PC-9 (cell line): ENCODE measurements at regions of chr3 and their contacts with region 1.

Region 1: DNA sequence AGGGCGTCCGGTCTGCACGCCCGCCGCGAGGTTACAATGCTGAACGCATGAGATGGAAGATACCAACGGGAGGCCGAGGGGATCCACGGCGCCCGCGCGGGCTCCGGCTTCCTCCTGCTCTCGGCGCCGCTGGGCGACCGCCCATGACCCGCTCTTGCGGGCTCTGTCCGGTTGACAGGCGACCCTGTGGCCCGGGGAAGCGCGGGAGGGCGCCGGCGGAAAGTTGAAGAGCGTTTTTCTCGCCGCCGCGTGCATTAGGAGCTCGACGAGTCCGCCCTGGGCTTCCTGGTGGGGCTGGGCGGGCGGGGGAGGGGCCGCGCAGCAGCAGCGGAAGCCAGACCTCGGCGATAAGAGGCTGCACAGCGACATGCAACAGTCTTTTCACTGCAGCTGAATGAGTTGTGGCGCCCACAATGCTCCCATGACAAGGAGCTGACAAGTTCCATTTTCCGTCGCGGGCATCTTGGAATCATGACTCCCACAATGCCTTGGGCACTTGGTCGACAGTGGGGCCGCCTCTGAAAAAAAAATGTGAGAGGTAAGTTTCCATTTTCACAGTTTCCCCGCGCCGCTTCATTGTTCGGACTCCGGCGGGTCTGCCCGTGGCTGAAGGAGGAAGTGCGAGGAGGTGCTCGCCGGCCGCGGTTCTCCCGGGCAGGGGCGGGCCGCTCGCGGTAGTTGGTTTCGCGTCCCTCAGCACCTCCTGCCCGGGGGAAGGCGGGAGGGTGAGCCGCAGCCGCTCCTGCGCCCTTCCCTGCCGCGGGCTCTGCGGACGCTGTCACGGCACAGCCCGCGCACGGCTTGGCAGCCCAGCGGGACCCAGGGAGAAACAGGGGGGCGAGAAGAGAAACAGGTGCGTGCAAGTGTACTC is at the start of gene MBNL1:
- DNase-seq: peak; percentile 71 to 77
- H3K4me3 ChIP-seq: peak within 1 kb of the TSS; percentile 85
- H3K27ac ChIP-seq: peak within 1 kb of the TSS; percentile 88
- H3K4me1 ChIP-seq: peaks cover 53% of the 10 kb centered on the region
- H3K27me3 ChIP-seq: no peaks in the 10 kb centered on the region
- CTCF ChIP-seq: no peak
- total RNA-seq, gene MBNL1: 122 and 176 TPM in 2 replicates

Region 2: GRCh38 chr3:150703299-150704134 is 1565.3 kb before region 1 on chr3 and contains the start of gene ERICH6:
- CTCF ChIA-PET with region 1: no interaction called
- POLR2A ChIA-PET with region 1: no interaction called
- intact Hi-C with region 1: no loop called
- DNase-seq: peak; percentile 75 to 94
- H3K4me3 ChIP-seq: peak within 1 kb of the TSS; percentile 72
- H3K27ac ChIP-seq: peak within 1 kb of the TSS; percentile 36
- H3K4me1 ChIP-seq: no peaks in the 10 kb centered on the region
- H3K27me3 ChIP-seq: no peaks in the 10 kb centered on the region
- CTCF ChIP-seq: peak; percentile 21; the same call in 1 of the 2 replicates
- total RNA-seq, gene ERICH6: not detected in 2 replicates

Region 3: GRCh38 chr3:151770956-151771355 is 497.8 kb before region 1 on chr3:
- CTCF ChIA-PET with region 1: no interaction called
- POLR2A ChIA-PET with region 1: no interaction called
- intact Hi-C with region 1: loop called (anchors 10 kb)
- DNase-seq: peak in 1 of 2 experiments; percentile 45
- H3K4me3 ChIP-seq: no peak overlapping the region
- H3K27ac ChIP-seq: no peak overlapping the region
- H3K4me1 ChIP-seq: peaks cover 13% of the 10 kb centered on the region
- H3K27me3 ChIP-seq: no peaks in the 10 kb centered on the region
- CTCF ChIP-seq: no peak

Region 4: DNA sequence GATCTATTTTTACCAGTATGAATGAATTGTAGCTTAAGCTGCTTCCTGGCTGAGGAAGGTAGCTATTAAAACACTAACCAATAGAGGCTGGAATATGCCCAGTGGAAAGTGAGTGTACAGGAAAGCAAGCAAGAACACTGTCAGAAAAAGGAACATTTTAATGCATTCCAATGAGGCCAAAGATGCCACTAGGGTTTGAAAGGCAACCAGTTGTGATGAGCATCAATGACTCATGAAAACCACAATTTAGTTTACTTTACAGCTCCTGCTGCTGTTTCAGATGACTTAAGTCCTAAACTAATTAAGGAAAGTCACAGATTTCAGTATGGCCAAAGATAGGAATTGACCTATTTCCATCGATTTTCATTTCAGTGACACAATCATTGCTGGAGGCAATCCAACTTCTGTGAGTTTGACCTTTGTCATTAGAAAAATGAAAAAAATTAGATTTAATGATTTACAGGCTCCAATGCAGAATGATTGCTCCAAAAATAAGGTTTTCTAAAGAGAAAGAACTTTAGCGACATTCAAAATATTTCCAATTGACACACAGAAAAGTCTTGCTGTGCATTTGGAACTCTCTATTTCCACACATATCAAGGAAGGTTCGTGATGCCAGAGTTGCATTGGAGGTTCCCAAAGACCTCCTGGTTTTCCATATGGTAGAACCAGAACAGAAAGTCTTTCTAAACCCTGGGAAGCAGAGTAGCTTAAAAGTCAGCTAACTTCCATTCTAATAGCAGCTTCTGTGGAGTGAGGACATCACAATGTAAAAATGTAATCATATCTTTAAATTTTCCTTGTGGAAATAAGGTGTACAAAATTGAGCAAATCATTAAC is 292.4 kb before region 1 on chr3:
- CTCF ChIA-PET with region 1: no interaction called
- POLR2A ChIA-PET with region 1: no interaction called
- intact Hi-C with region 1: loop called (anchors 5 kb)
- DNase-seq: peak; percentile 49 to 93
- H3K4me3 ChIP-seq: peak overlapping the region; percentile 8; the same call in 1 of the 2 replicates
- H3K27ac ChIP-seq: peak overlapping the region; percentile 42
- H3K4me1 ChIP-seq: peaks cover 16% of the 10 kb centered on the region
- H3K27me3 ChIP-seq: no peaks in the 10 kb centered on the region
- CTCF ChIP-seq: no peak

Region 5: GRCh38 chr3:152258448-152259393 is 10.1 kb before region 1 on chr3:
- CTCF ChIA-PET with region 1: no interaction called
- POLR2A ChIA-PET with region 1: interaction called, 6 read pairs
- intact Hi-C with region 1: loop called (anchors 1 kb)
- DNase-seq: peak; percentile 82 to 99
- H3K4me3 ChIP-seq: peak overlapping the region; percentile 22; the same call in 1 of the 2 replicates
- H3K27ac ChIP-seq: peak overlapping the region; percentile 54
- H3K4me1 ChIP-seq: peaks cover 26% of the 10 kb centered on the region
- H3K27me3 ChIP-seq: no peaks in the 10 kb centered on the region
- CTCF ChIP-seq: no peak

Region 6: GRCh38 chr3:152328841-152329240 is 60.1 kb after region 1 on chr3:
- CTCF ChIA-PET with region 1: interaction called, 3 read pairs
- POLR2A ChIA-PET with region 1: no interaction called
- intact Hi-C with region 1: loop called (anchors 1 kb)
- DNase-seq: peak in 1 of 2 experiments; percentile 91
- H3K4me3 ChIP-seq: peak overlapping the region; percentile 28
- H3K27ac ChIP-seq: peak overlapping the region; percentile 88
- H3K4me1 ChIP-seq: peaks cover 52% of the 10 kb centered on the region
- H3K27me3 ChIP-seq: no peaks in the 10 kb centered on the region
- CTCF ChIP-seq: no peak

Region 7: GRCh38 chr3:152444029-152444641 is 175.3 kb after region 1 on chr3:
- CTCF ChIA-PET with region 1: interaction called, 15 read pairs
- POLR2A ChIA-PET with region 1: no interaction called
- intact Hi-C with region 1: loop called (anchors 2 kb)
- DNase-seq: peak in 1 of 2 experiments; percentile 63
- H3K4me3 ChIP-seq: no peak overlapping the region
- H3K27ac ChIP-seq: peak overlapping the region; percentile 10; the same call in 1 of the 2 replicates
- H3K4me1 ChIP-seq: no peaks in the 10 kb centered on the region
- H3K27me3 ChIP-seq: no peaks in the 10 kb centered on the region
- CTCF ChIP-seq: peak; percentile 87

Region 8: DNA sequence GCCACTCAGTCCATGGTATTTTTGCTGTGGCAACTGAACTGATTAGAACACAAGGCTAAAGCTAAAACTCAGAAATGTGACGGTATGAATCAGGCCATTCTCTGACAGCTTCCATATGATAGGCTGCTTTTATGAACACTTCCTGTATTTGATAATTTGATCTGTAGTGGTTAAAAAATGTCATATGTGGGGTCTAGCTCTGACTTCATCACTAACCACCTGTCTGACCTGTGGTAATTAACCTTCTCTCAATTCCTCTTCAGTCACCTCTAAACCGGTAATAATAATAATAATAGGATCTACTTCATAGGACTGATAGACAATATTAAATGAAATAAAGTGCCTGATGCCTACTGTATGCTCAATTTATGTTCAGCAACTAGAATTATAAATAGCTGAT is 223.1 kb after region 1 on chr3:
- CTCF ChIA-PET with region 1: no interaction called
- POLR2A ChIA-PET with region 1: no interaction called
- intact Hi-C with region 1: no loop called
- DNase-seq: no peak
- H3K4me3 ChIP-seq: no peak overlapping the region
- H3K27ac ChIP-seq: no peak overlapping the region
- H3K4me1 ChIP-seq: no peaks in the 10 kb centered on the region
- H3K27me3 ChIP-seq: no peaks in the 10 kb centered on the region
- CTCF ChIP-seq: no peak